ENCODE measurements at regions of chr11 and their contacts with region 1.

Region 1: DNA sequence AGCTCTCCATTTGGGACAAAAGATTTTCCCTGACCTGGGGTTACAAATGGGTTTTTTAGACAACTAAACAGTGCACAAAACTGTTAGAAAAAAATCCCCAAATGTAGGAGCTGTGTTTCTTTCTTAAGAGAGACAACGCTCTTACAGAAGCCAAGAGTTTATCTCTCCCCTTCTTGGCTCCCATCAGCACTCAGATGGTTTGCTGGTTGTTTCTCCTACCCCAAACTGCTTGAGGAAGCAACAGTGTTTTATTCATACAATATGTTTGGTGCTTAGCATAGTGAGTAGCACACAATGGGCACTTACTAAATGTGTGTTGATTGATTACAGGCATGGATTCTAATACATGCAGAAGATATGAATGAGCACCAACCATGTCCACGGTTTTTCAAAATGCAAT is 209.5 kb upstream of the ANO5 start:
- DNase-seq: no peak
- H3K4me3 ChIP-seq: no peak overlapping the region
- H3K27ac ChIP-seq: no peak overlapping the region
- H3K4me1 ChIP-seq: peaks cover 28% of the 10 kb centered on the region
- H3K27me3 ChIP-seq: no peaks in the 10 kb centered on the region
- CTCF ChIP-seq: no peak

Region 2: GRCh38 chr11:21794306-21794705 is 189.1 kb before region 1 on chr11:
- CTCF ChIA-PET with region 1: no interaction called
- POLR2A ChIA-PET with region 1: no interaction called
- intact Hi-C with region 1: no loop called
- DNase-seq: no peak
- H3K4me3 ChIP-seq: no peak overlapping the region
- H3K27ac ChIP-seq: no peak overlapping the region
- H3K4me1 ChIP-seq: no peaks in the 10 kb centered on the region
- H3K27me3 ChIP-seq: no peaks in the 10 kb centered on the region
- CTCF ChIP-seq: no peak

Region 3: GRCh38 chr11:21933095-21933494 is 50.3 kb before region 1 on chr11:
- CTCF ChIA-PET with region 1: no interaction called
- POLR2A ChIA-PET with region 1: no interaction called
- intact Hi-C with region 1: loop called (anchors 5 kb)
- DNase-seq: no peak
- H3K4me3 ChIP-seq: no peak overlapping the region
- H3K27ac ChIP-seq: no peak overlapping the region
- H3K4me1 ChIP-seq: no peaks in the 10 kb centered on the region
- H3K27me3 ChIP-seq: no peaks in the 10 kb centered on the region
- CTCF ChIP-seq: peak; percentile 69

Region 4: DNA sequence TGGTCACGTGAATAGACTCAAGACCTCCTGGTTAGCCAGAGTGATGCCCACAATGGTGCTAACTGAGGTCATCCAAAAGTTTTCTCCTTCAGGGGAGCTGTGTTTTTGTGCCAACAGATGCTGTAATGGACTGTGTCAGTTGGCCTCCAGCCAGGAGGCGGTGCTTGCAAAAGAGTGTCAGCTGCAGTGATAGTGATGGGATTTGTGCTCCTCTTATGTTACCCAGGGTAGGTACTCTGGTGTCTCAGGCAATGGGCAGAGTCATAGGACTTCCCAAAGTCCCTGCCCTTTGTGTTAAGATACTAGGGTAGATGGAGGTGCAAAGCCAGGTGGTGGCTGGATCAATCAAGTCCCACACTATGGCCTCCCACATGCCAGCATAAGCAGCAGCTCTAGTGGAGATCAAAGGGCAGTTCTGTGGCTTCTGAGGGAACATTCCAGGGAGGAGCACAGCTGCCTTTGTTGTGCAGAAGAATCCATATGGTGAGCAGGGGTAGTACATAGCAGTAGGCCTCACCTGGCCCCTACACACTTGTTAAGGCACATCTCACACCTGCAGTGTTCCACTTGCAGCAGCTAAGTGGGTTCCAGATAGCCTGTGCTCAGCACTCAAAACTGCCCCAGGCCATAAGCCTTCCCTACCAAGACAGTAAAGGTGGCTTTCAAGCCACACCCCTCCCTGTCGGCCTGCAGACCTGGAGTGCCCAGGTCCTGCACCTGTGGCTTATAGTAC is 651.6 kb after region 1 on chr11:
- CTCF ChIA-PET with region 1: no interaction called
- POLR2A ChIA-PET with region 1: no interaction called
- intact Hi-C with region 1: no loop called
- DNase-seq: peak; percentile 51
- H3K4me3 ChIP-seq: no peak overlapping the region
- H3K27ac ChIP-seq: no peak overlapping the region
- H3K4me1 ChIP-seq: no peaks in the 10 kb centered on the region
- H3K27me3 ChIP-seq: no peaks in the 10 kb centered on the region
- CTCF ChIP-seq: no peak